Left colon (tissue), 2 donors: ENCODE measurements at regions of chr9 and their contacts with region 1.

Region 1: DNA sequence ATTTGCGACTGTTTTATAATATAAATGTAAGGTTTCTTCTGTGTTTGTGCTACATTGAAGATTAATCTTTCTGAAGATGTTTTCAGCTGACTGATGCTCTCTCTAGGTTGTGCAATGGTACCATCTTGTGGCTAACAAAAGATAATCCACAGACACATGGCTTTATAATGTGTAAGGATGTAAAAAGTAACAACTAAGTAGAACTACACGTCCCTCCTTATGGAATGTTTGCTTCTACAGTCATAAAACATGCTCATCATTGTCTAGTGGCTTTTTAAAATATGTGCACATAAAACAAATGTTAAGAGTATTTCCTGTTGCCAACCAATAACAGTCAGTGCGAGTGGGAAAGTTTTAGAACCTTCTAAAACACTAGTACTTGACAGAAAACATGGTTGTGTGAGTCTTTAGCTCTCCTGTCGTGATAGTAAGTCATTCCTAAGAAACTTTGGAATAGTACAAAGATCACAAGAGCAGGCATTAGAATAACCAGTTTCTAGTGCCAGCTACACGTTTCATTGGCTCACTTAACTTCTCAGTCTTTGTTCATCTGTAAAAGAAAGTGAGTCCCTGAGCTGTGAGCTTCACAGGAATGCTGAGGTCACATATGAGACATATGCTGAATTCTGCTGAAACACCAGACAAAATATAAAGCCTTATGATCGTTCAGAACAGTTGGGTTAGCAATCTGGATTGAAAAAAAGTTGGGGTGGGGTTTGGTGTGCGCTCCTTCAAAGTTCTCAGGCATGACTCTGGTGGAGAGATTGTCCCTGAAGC is 75.7 kb upstream of the GLIS3 start:
- DNase-seq: no peak
- ATAC-seq: peak; percentile 51

Region 2: DNA sequence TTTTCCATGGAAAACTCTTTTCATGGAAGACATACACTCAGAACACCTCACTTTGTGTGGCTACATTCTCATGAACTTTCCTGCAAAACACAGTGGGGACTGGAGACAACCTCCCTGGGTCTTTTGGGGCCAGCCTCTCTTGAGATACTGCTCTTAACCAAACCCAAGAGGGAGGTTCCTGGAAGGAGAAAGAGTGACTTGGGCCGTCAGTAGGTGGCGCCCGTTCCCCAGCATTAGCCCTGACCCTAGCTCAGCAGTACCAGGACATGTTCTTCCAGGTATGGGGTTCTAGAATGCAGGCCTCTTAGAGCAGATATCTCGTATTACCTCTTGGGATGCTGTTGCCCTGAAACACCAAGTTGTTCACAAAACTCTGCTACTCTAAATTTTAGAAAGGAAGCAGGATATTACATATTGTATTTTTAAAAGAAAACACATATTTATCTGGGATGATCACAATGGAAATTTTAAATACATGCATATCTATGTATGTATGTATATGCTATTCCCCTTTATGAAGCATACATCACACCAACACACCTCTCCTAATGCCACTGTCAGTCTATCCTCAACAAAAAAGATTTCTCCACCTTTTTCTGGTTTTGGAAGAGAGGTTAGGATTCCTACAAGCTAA is 59.9 kb before region 1 on chr9:
- intact Hi-C with region 1: loop called in 1 of 2 experiments (anchors 10 kb)
- DNase-seq: peak; percentile 41 to 85
- ATAC-seq: peak; percentile 90

Region 3: GRCh38 chr9:4486176-4486575 is 110.6 kb after region 1 on chr9:
- intact Hi-C with region 1: no loop called
- DNase-seq: no peak
- ATAC-seq: no peak